HCT116 (cell line): ENCODE measurements at regions of chr6 and their contacts with region 1.

Region 1: GRCh38 chr6:148064406-148065134 is 278.1 kb upstream of the SASH1 start:
- DNase-seq: no peak
- ATAC-seq: no peak
- H3K4me3 ChIP-seq: no peak overlapping the region
- H3K27ac ChIP-seq: no peak overlapping the region
- H3K4me1 ChIP-seq: peaks cover 0 to 6% of the 10 kb centered on the region in 2 experiments; a peak in 1 of 4 replicates
- H3K27me3 ChIP-seq: no peaks in the 10 kb centered on the region
- CTCF ChIP-seq: no peak
- POLR2A ChIP-seq: no peak
- RAD21 ChIP-seq: no peak

Region 2: GRCh38 chr6:147891671-147892070 is 172.9 kb before region 1 on chr6:
- CTCF ChIA-PET with region 1: no interaction called
- POLR2A ChIA-PET with region 1: no interaction called
- RAD21 ChIA-PET with region 1: no interaction called
- intact Hi-C with region 1: no loop called
- DNase-seq: no peak
- ATAC-seq: no peak
- H3K4me3 ChIP-seq: no peak overlapping the region
- H3K27ac ChIP-seq: no peak overlapping the region
- H3K4me1 ChIP-seq: no peaks in the 10 kb centered on the region
- H3K27me3 ChIP-seq: no peaks in the 10 kb centered on the region
- CTCF ChIP-seq: no peak
- POLR2A ChIP-seq: no peak
- RAD21 ChIP-seq: no peak

Region 3: DNA sequence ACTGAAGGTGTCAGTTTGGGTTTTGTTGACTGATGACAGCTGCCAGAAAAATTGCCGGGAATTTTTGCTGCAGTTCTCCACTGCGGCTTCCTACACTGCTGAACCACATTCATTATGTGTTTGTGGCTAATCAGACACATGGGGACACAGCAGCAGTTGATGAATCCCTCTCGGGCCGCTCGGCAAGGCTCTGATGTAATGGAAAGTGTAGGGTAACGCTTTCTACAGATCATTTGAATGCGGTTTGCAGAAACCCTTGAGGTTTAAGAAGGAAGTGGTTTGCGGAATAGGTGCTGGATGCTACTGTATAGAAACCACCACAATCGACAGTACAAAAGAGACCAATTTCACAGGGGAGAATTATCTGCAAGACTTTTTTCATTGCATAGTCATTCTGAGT is 139.4 kb after region 1 on chr6:
- CTCF ChIA-PET with region 1: no interaction called
- POLR2A ChIA-PET with region 1: no interaction called
- RAD21 ChIA-PET with region 1: no interaction called
- intact Hi-C with region 1: no loop called
- DNase-seq: no peak
- ATAC-seq: no peak
- H3K4me3 ChIP-seq: no peak overlapping the region
- H3K27ac ChIP-seq: no peak overlapping the region
- H3K4me1 ChIP-seq: no peaks in the 10 kb centered on the region
- H3K27me3 ChIP-seq: no peaks in the 10 kb centered on the region
- CTCF ChIP-seq: no peak
- POLR2A ChIP-seq: no peak
- RAD21 ChIP-seq: no peak

Region 4: GRCh38 chr6:148273962-148274752 is 209.6 kb after region 1 on chr6:
- CTCF ChIA-PET with region 1: no interaction called
- POLR2A ChIA-PET with region 1: no interaction called
- RAD21 ChIA-PET with region 1: no interaction called
- intact Hi-C with region 1: no loop called
- DNase-seq: no peak
- ATAC-seq: no peak
- H3K4me3 ChIP-seq: no peak overlapping the region
- H3K27ac ChIP-seq: no peak overlapping the region
- H3K4me1 ChIP-seq: no peaks in the 10 kb centered on the region
- H3K27me3 ChIP-seq: no peaks in the 10 kb centered on the region
- CTCF ChIP-seq: no peak
- POLR2A ChIP-seq: no peak
- RAD21 ChIP-seq: no peak

Region 5: GRCh38 chr6:148776321-148777308 is 712.0 kb after region 1 on chr6:
- CTCF ChIA-PET with region 1: no interaction called
- POLR2A ChIA-PET with region 1: no interaction called
- RAD21 ChIA-PET with region 1: no interaction called
- intact Hi-C with region 1: loop called (anchors 10 kb)
- DNase-seq: no peak
- ATAC-seq: no peak
- H3K4me3 ChIP-seq: no peak overlapping the region
- H3K27ac ChIP-seq: no peak overlapping the region
- H3K4me1 ChIP-seq: peaks cover 0 to 6% of the 10 kb centered on the region in 2 experiments; a peak in 1 of 4 replicates
- H3K27me3 ChIP-seq: no peaks in the 10 kb centered on the region
- CTCF ChIP-seq: no peak
- POLR2A ChIP-seq: no peak
- RAD21 ChIP-seq: no peak